Activated CD4-positive, alpha-beta memory T cell treated with anti-CD3 and anti-CD28 coated beads, Interleukin-2, amount 10 ng/mL, durations not matched to agents 7 days and 5 days (primary cell): ENCODE measurements at regions of chr11 and their contacts with region 1.

Region 1: GRCh38 chr11:45102810-45103621 is 43.4 kb upstream of the PRDM11 start:
- DNase-seq: peak; percentile 76
- H3K4me3 Mint-ChIP-seq: peak overlapping the region; percentile 62
- H3K27ac Mint-ChIP-seq: peak overlapping the region; percentile 65
- H3K4me1 Mint-ChIP-seq: peaks cover 11% of the 10 kb centered on the region
- H3K27me3 Mint-ChIP-seq: peaks cover 34% of the 10 kb centered on the region

Region 2: DNA sequence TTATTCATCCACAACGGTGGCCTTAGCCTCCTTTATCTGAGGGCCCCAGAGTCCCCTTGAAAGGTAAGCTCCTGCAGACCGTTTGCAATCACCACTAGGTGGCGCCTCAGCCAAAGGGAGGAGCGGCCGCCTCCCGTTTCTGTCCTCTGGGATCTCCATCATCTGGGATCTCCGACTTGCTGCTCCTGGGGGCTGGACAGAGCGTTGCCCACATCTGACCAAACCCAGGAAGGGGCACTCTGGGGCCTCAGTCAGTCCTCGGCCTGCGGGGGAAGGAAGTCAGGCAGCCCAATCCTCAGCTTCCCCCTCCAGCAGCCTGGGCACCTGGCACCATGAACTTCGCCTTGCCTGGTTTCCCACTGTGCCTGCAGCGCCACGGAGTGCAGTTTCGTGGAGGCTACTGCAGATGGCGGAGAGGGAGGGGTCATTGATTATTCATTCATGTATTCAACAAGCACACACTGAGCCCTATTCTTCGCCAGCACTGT is 175.8 kb before region 1 on chr11:
- CTCF ChIA-PET with region 1: interaction called, 144 read pairs
- POLR2A ChIA-PET with region 1: interaction called, 3 read pairs
- DNase-seq: peak; percentile 58
- H3K4me3 Mint-ChIP-seq: no peak overlapping the region
- H3K27ac Mint-ChIP-seq: no peak overlapping the region
- H3K4me1 Mint-ChIP-seq: no peaks in the 10 kb centered on the region
- H3K27me3 Mint-ChIP-seq: no peaks in the 10 kb centered on the region

Region 3: DNA sequence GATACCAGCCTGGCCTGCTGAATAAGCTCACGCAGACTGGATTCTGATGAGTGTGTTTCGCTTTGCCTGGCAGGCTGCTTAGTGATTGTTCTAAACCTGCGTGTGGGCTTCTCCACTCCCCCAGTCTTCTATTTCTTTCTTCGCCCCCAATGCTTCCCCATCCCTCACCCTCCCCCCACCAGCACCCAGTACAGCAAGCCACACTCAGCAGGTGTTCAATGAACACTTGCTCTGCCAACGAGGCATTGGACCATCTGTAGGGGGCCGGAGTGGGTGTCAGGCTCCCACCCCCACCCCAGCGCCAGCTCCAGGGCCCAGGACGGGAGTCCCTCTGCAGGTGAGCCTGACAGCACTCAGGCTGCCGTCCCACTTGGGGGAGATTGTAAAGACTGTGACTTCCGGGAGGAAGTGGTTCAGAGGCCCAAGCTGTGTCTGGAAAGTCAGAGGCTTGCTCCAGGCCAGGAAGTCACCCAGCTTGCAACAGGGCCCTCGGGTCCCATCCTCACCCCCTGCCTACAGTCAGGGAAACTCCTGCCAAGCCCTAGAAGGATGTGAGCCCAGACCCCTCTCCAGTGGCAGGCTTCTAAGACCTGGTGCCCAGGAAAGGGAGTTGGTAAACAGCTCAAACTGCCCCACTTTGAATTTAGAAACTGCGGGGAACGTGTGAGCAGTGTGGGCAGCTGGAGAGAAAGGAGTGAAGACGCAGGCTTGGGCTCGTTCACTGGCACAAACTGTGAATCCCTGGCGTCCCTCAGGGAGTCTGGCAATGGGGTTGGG is 22.9 kb before region 1 on chr11:
- CTCF ChIA-PET with region 1: interaction called, 33 read pairs
- POLR2A ChIA-PET with region 1: interaction called, 6 read pairs
- DNase-seq: peak; percentile 71
- H3K4me3 Mint-ChIP-seq: peak overlapping the region; percentile 25
- H3K27ac Mint-ChIP-seq: peak overlapping the region; percentile 81
- H3K4me1 Mint-ChIP-seq: peaks cover 40% of the 10 kb centered on the region
- H3K27me3 Mint-ChIP-seq: peaks cover 3% of the 10 kb centered on the region

Region 4: GRCh38 chr11:45089676-45090499 is 13.1 kb before region 1 on chr11:
- CTCF ChIA-PET with region 1: interaction called, 45 read pairs
- POLR2A ChIA-PET with region 1: interaction called, 7 read pairs
- DNase-seq: peak; percentile 31
- H3K4me3 Mint-ChIP-seq: no peak overlapping the region
- H3K27ac Mint-ChIP-seq: no peak overlapping the region
- H3K4me1 Mint-ChIP-seq: peaks cover 18% of the 10 kb centered on the region
- H3K27me3 Mint-ChIP-seq: peaks cover 12% of the 10 kb centered on the region

Region 5: GRCh38 chr11:45147017-45147728 is 44.2 kb after region 1 on chr11:
- CTCF ChIA-PET with region 1: no interaction called
- POLR2A ChIA-PET with region 1: no interaction called
- DNase-seq: peak; percentile 94
- H3K4me3 Mint-ChIP-seq: peak overlapping the region; percentile 77
- H3K27ac Mint-ChIP-seq: peak overlapping the region; percentile 70
- H3K4me1 Mint-ChIP-seq: peaks cover 17% of the 10 kb centered on the region
- H3K27me3 Mint-ChIP-seq: peaks cover 32% of the 10 kb centered on the region

Region 6: GRCh38 chr11:45332276-45332934 is 229.4 kb after region 1 on chr11:
- CTCF ChIA-PET with region 1: interaction called, 14 read pairs
- POLR2A ChIA-PET with region 1: no interaction called
- DNase-seq: peak; percentile 38
- H3K4me3 Mint-ChIP-seq: no peak overlapping the region
- H3K27ac Mint-ChIP-seq: no peak overlapping the region
- H3K4me1 Mint-ChIP-seq: no peaks in the 10 kb centered on the region
- H3K27me3 Mint-ChIP-seq: peaks cover 13% of the 10 kb centered on the region